ENCODE measurements at regions of chr2 and their contacts with region 1.

Region 1: DNA sequence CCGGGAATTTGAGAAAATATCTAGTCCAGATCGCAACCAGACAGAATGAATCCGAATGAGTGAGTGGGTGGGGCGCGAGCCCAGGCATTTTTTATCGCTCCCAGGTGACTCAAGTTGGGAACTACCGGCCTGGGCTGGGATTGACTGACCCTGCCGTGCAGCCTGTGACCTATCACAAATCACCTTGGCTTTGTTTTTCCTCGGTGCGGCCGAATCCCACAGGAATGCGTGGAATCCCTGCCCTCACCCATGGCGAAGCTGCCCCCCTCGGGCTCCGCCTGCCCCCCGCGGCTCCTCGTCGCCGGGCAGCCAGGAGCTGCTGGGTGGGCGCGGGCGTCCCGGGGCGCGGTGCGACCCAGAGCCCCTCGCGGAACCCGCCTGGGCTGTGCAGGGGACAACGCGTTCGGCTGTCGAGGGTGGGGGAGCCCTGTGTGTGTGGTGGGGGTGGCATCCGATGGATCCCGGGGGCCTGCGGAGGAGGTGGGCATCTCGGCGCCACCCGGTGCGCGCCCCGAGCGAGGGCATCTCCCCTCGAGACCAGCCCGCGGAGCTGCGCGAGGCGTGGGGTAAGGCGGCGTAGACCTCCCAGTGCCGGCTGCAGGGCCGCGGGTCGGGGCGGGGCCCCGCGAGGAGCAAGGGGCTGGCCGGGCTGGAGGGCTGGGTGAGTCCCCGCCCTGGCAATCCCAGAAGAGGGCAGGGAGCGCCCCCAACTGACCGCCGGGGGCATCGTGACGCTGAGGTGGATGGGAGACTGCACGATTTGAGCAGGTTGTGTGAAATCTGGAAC is 16.5 kb downstream of the B3GNT7 start:
- DNase-seq: peak; percentile 69 to 98
- H3K4me3 ChIP-seq: peak overlapping the region; percentile 33 to 62 (median 42)
- H3K27ac ChIP-seq: peak overlapping the region; percentile 41; the same call in 1 of the 2 replicates
- H3K4me1 ChIP-seq: peaks cover 14 to 29% (median 20%) of the 10 kb centered on the region in 4 experiments
- H3K27me3 ChIP-seq: no peaks in the 10 kb centered on the region
- CTCF ChIP-seq: peak; percentile 90 to 97 (median 96)
- EP300 ChIP-seq: no peak
- POLR2A ChIP-seq: peak in 1 of 2 experiments; percentile 63; a peak in 1 of 3 replicates
- RAD21 ChIP-seq: peak; percentile 93 to 94

Region 2: GRCh38 chr2:231245253-231246094 is 166.6 kb before region 1 on chr2:
- CTCF ChIA-PET with region 1: interaction called, 28 read pairs
- POLR2A ChIA-PET with region 1: interaction called, 3 read pairs
- DNase-seq: no peak
- H3K4me3 ChIP-seq: no peak overlapping the region
- H3K27ac ChIP-seq: no peak overlapping the region
- H3K4me1 ChIP-seq: peaks cover 0 to 3% (median 0%) of the 10 kb centered on the region in 4 experiments; a peak in 2 of 7 replicates
- H3K27me3 ChIP-seq: no peaks in the 10 kb centered on the region
- CTCF ChIP-seq: peak in 2 of 3 experiments; percentile 8 to 21; a peak in 2 of 4 replicates
- EP300 ChIP-seq: no peak
- POLR2A ChIP-seq: no peak
- RAD21 ChIP-seq: peak in 1 of 2 experiments; percentile 17; a peak in 1 of 4 replicates

Region 3: GRCh38 chr2:231321556-231322334 is 90.3 kb before region 1 on chr2:
- CTCF ChIA-PET with region 1: interaction called, 11 read pairs
- POLR2A ChIA-PET with region 1: interaction called, 3 read pairs
- DNase-seq: peak in 1 of 2 experiments; percentile 29
- H3K4me3 ChIP-seq: no peak overlapping the region
- H3K27ac ChIP-seq: no peak overlapping the region
- H3K4me1 ChIP-seq: peaks cover 0 to 8% (median 1%) of the 10 kb centered on the region in 4 experiments; a peak in 2 of 7 replicates
- H3K27me3 ChIP-seq: no peaks in the 10 kb centered on the region
- CTCF ChIP-seq: no peak
- EP300 ChIP-seq: no peak
- POLR2A ChIP-seq: no peak
- RAD21 ChIP-seq: no peak

Region 4: DNA sequence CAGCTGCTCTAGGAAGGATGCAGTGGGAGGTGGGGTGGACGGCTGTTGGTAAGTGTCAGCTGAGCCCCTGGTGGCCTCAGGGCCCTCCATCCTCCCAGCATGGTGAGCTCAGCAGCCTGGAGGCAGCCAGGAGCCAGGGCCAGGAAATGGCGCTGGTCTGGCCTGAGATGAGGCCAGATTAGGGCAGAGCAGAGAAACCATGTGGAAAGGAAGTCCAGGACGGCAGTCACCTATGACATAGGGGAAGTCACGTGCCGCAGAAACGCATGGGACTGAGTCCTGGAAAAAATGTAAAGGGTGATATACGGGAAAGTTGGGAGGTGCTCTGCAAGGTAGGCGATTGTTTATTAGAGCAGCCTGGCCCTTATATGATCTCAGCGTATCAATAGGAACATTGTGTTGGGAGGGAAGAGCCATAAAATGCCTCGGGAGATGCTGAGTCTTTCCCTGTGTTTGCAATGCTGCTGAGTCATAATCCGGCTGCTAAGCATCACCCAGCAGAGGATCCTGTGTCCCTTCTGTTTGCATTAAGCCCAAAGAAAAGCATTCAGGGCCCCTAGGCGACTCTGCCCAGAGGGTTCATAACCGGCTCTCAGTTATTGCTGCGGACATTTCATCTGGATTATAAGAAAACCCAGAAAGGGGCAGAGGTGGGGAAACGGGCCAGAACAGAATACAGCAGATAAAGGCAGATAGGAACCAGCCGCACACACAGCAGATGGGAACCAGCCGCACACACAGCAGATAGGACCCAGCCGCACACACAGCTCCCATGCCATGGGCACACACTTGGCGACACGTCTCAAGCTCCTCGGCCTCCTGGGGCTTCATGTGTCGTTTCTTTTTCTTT is 46.8 kb before region 1 on chr2:
- CTCF ChIA-PET with region 1: interaction called, 617 read pairs
- POLR2A ChIA-PET with region 1: interaction called, 4 read pairs
- DNase-seq: no peak
- H3K4me3 ChIP-seq: no peak overlapping the region
- H3K27ac ChIP-seq: no peak overlapping the region
- H3K4me1 ChIP-seq: peaks cover 4 to 23% (median 7%) of the 10 kb centered on the region in 4 experiments
- H3K27me3 ChIP-seq: no peaks in the 10 kb centered on the region
- CTCF ChIP-seq: no peak
- EP300 ChIP-seq: no peak
- POLR2A ChIP-seq: no peak
- RAD21 ChIP-seq: no peak

Region 5: DNA sequence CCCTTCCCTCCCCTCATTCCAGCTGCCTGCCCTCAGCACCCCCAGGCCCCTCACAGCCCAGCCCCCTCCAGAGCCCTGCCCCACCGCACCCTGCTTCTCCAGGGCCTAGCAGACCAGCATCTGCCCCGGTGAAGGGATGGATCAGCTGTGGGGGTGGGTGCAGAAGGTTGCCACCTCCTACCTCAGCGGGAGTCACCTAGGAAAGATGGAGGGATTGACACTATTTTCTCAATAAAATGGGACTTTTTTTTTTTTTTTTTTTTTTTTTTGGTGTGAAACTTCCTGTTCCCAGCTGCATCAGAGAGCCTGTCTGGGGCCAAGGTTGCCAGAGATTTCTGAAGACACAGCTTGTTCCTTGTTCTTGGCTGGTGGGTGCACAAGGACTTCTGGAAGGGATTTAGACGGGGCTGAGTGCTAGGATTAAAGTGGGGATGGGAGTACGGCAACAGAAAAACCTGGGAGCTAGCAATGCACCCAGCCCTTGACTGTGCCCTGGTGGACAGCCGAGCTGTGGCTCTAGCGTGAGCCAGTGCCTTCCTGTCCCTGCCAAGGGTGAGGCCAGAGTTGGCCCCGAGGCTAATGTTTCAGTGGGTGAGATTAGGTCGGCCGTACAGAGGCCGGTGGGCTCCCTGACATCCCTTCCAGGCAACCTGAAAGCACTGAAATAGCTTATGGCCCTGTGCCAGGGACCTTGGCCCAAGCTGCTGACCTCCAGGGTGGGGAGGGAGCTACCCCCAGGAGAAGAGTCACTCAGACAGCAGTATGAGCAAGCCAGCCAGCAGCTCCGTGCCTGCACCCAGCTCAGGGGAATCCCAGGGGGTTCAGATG is 12.0 kb before region 1 on chr2:
- CTCF ChIA-PET with region 1: interaction called, 537 read pairs
- POLR2A ChIA-PET with region 1: interaction called, 17 read pairs
- DNase-seq: peak in 1 of 2 experiments; percentile 54
- H3K4me3 ChIP-seq: no peak overlapping the region
- H3K27ac ChIP-seq: no peak overlapping the region
- H3K4me1 ChIP-seq: peaks cover 0 to 15% (median 12%) of the 10 kb centered on the region in 4 experiments; a peak in 6 of 7 replicates
- H3K27me3 ChIP-seq: no peaks in the 10 kb centered on the region
- CTCF ChIP-seq: no peak
- EP300 ChIP-seq: no peak
- POLR2A ChIP-seq: no peak
- RAD21 ChIP-seq: no peak

Region 6: DNA sequence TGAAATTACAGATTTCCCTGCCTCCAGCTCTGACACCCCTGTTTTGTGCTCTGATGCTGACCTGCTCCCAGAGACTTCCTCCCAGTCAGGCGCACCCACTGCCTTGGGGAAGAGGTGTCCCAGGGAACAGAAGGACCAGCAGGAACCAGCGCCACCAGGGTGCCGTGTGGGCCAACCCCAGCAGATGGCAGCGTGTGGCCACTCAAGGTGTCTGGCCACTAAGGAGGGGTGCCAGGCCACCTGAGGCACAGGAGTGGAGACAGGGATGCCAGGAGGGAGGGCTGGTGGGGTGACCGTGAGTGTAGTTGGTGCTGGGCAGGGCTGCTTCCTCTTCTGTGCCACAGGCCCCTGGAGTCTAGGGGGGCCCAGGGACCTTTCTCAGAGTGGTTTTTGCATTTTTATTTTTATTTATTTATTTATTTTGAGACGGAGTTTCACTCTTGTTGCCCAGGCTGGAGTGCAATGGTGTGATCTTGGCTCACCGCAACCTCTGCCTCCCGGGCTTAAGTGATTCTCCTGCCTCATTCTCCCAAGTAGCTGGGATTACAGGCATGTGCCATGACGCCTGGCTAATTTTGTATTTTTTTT is 236.7 kb after region 1 on chr2:
- CTCF ChIA-PET with region 1: no interaction called
- POLR2A ChIA-PET with region 1: no interaction called
- DNase-seq: peak in 1 of 2 experiments; percentile 88
- H3K4me3 ChIP-seq: no peak overlapping the region
- H3K27ac ChIP-seq: no peak overlapping the region
- H3K4me1 ChIP-seq: peaks cover 2 to 7% (median 3%) of the 10 kb centered on the region in 4 experiments; a peak in 4 of 7 replicates
- H3K27me3 ChIP-seq: no peaks in the 10 kb centered on the region
- CTCF ChIP-seq: peak; percentile 88 to 95 (median 90)
- EP300 ChIP-seq: no peak
- POLR2A ChIP-seq: no peak
- RAD21 ChIP-seq: peak; percentile 87 to 92

Measured in H1 (cell line).